WTC11 (cell line): ENCODE measurements at regions of chr18 and their contacts with region 1.

Region 1: DNA sequence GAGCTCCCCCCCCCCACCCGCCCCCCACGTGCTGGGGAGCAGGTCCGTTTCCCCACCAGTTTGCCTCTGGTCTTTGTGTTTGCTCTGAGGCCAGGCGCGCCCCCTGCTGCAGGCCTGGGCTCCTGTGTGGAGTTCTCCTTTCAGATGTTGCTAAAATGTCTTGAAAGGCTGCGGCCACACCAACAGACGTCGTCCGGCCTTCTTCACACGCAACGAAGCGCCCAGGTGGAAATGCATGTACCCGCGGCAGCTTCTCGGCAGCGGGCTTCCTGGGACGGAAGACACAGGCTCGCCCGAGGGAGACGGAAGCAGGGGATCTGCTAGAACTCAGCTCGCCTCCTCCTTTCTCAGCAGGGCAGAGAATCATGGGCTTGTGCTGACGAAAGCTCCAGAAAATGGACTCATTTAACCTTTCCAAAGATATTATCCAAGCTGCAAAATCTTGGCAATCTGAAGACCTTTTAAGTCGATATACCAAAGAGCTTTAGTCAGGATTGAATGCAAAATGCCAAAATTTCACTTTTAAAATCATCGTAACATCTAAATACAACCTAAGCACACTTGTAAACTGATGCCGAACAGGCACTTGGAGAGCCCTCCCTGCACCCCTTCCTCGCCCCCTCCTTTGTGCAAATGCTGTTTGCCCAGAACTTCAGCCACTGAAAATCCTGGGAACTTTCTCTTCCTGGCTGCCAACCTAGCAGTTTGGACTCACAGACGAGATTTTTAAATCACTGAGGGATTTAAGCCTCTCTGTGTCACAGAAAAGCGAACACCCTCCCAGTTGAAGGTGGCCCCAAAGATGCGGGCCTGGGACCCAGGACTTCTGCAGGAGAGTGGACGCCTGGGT is 125.5 kb upstream of the ZNF516 start:
- DNase-seq: peak; percentile 81
- ATAC-seq: peak; percentile 75
- H3K4me3 Mint-ChIP-seq: peak overlapping the region; percentile 77
- H3K27ac Mint-ChIP-seq: peak overlapping the region; percentile 89
- H3K4me1 Mint-ChIP-seq: peaks cover 60% of the 10 kb centered on the region
- H3K27me3 Mint-ChIP-seq: peaks cover 39% of the 10 kb centered on the region
- CTCF ChIP-seq: 0 out of 2 replicates have a peak, but pooled peaks have one; percentile 19

Region 2: DNA sequence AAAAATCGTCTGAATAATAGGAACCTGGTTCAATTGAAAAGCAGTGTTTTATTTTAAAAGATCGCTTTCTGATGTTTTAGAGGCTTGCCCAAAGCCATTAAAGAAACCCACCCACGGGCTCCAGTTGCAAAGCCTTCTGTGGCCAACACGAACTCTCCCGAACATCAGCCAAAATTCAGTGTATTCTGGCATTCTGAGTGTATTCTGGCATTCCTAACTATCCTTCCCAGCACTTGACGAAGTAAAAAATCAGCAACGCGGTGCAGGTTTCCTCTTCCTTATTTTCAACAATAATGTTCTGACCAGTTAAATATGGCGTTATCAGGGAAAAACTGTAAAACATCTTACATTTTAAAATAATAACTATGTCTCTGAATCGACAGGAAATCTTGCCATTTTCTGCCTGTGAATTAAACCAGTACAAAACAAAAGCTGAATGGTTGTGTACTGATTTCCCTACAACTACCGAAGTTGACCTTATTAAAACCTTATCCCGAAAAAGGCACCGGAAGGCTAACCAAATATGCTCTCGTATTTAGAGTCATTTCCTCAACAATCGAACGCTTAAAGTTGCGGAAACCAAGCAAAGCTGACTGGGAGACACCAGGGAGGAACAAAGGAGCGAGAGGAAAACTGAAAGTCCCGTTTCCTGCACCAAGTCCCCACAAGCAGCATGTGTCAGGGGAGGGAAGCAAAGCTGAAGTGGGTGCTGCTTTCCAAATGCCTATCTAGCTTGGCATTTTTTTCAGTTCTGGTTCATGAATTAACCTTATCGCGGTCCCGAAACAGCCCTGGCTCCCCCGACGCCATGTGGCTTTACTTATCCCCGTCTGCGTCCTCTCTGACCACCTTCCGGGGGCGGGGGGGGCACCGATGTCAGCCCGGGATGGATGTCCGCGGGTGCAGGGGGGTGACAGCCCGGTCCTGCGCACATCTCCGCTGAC is 169.8 kb before region 1 on chr18:
- CTCF ChIA-PET with region 1: interaction called, 6 read pairs
- POLR2A ChIA-PET with region 1: interaction called, 11 read pairs
- DNase-seq: no peak
- ATAC-seq: peak; percentile 53
- H3K4me3 Mint-ChIP-seq: peak overlapping the region; percentile 69
- H3K27ac Mint-ChIP-seq: peak overlapping the region; percentile 58
- H3K4me1 Mint-ChIP-seq: peaks cover 83% of the 10 kb centered on the region
- H3K27me3 Mint-ChIP-seq: peaks cover 29% of the 10 kb centered on the region
- CTCF ChIP-seq: no peak

Region 3: GRCh38 chr18:76604935-76605240 is 15.7 kb before region 1 on chr18:
- CTCF ChIA-PET with region 1: no interaction called
- POLR2A ChIA-PET with region 1: no interaction called
- DNase-seq: no peak
- ATAC-seq: no peak
- H3K4me3 Mint-ChIP-seq: no peak overlapping the region
- H3K27ac Mint-ChIP-seq: no peak overlapping the region
- H3K4me1 Mint-ChIP-seq: no peaks in the 10 kb centered on the region
- H3K27me3 Mint-ChIP-seq: no peaks in the 10 kb centered on the region
- CTCF ChIP-seq: no peak

Region 4: DNA sequence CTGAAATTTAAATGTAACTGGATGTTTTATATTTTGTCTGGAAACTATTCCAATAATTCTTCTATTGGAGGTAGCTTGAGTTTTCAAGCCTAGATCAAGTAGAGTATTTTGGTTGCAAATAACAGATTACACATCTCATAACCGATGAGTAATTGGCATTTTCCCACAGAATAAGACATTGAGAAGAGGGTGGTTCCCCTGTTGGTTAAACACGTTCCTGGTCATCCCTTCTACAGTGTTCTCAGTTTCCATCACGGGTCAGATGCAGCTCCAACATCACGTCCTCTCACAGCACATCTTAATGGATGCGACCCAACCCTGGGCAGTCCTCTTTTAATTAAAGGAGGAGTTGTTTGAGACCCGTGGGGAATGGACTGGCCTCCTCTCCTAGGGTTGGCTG is 23.4 kb after region 1 on chr18:
- CTCF ChIA-PET with region 1: no interaction called
- POLR2A ChIA-PET with region 1: no interaction called
- DNase-seq: no peak
- ATAC-seq: no peak
- H3K4me3 Mint-ChIP-seq: no peak overlapping the region
- H3K27ac Mint-ChIP-seq: no peak overlapping the region
- H3K4me1 Mint-ChIP-seq: peaks cover 2% of the 10 kb centered on the region; the same call in 1 of the 2 replicates
- H3K27me3 Mint-ChIP-seq: no peaks in the 10 kb centered on the region
- CTCF ChIP-seq: no peak